H1 (cell line): ENCODE measurements at regions of chr1 and their contacts with region 1.

Region 1: DNA sequence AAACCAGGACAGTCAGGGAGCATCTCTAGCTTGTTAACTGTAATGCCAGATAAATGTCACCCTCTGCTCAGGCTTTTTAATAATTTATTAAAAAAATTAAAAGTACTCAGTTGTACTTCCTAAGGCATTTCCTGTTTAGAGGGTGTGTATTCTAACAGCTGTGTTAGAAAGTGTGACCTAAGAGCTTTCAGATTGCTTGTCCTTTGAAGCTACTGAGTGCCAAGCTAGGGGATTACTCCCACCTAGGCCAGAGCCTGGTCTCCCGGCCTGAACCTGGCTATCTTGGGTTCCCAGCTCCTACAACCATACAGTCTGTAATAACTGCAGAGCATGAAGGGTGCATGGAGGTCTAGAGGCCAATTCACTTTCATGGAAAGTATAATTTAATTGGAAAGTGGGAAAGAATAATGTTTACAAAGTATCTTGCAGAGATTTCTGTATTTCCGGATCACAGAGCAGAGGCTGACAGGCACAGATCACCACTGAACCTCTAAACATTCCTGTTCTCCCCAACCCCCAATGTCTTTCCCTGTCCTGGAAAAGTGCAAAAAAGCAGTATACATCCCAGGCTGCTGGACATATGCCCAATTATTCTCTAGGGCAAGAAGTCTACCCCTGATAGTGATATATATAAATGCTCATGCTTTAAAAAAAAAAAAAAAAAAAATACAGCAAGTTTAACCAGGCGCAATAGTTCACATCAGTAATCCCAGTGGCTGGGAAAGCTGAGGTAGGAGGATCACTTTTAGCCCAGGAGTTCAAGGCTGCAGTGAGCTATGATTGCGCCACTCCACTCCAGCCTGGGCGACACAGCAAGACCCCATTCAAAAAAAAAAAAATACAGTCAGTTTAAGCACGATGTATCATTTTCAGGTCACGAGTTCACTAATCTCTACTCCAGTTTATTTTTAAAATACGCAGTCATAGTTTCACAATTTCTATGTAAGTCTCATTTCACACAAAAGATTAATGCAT is 36.7 kb upstream of the RAP1A start:
- DNase-seq: no peak
- H3K4me3 ChIP-seq: no peak overlapping the region
- H3K27ac ChIP-seq: no peak overlapping the region
- H3K4me1 ChIP-seq: no peaks in the 10 kb centered on the region
- H3K27me3 ChIP-seq: no peaks in the 10 kb centered on the region
- CTCF ChIP-seq: no peak
- EP300 ChIP-seq: no peak
- POLR2A ChIP-seq: no peak
- RAD21 ChIP-seq: no peak

Region 2: DNA sequence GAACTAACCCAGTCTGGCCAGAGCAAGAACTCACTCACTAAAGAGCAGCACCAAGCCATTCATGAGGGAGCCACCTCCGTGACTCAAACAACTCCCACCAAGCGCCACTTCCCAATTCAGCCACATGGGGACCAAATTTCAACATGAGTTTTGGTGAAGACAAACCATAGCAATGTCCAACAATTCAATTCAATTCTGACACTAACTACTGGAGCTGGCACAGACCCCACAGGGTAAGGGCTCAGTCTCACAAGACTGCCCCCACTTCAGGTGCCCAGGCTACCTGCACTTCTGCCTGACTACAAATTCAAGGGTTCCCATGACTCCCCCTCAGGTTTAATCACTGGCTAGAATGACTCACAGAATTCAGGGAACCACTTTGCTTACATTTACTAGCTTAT is 12.2 kb before region 1 on chr1:
- CTCF ChIA-PET with region 1: interaction called, 12 read pairs
- POLR2A ChIA-PET with region 1: no interaction called
- DNase-seq: peak in 1 of 2 experiments; percentile 56
- H3K4me3 ChIP-seq: no peak overlapping the region
- H3K27ac ChIP-seq: no peak overlapping the region
- H3K4me1 ChIP-seq: peaks cover 0 to 6% (median 2%) of the 10 kb centered on the region in 4 experiments; a peak in 3 of 7 replicates
- H3K27me3 ChIP-seq: no peaks in the 10 kb centered on the region
- CTCF ChIP-seq: peak; percentile 30 to 62 (median 40)
- EP300 ChIP-seq: no peak
- POLR2A ChIP-seq: no peak
- RAD21 ChIP-seq: peak; percentile 3 to 26; a peak in 1 of 4 replicates